Ascending aorta (tissue), 2 donors: ENCODE measurements at regions of chr3 and their contacts with region 1.

Region 1: GRCh38 chr3:71657831-71658530 is 67.2 kb downstream of the EIF4E3 start:
- DNase-seq: peak; percentile 64 to 94
- H3K4me3 ChIP-seq: peak overlapping the region; percentile 0 to 9
- H3K27ac ChIP-seq: peak overlapping the region; percentile 36 to 59
- H3K4me1 ChIP-seq: peaks cover 0 to 9% of the 10 kb centered on the region in 2 donors
- H3K27me3 ChIP-seq: no peaks in the 10 kb centered on the region
- CTCF ChIP-seq: no peak

Region 2: DNA sequence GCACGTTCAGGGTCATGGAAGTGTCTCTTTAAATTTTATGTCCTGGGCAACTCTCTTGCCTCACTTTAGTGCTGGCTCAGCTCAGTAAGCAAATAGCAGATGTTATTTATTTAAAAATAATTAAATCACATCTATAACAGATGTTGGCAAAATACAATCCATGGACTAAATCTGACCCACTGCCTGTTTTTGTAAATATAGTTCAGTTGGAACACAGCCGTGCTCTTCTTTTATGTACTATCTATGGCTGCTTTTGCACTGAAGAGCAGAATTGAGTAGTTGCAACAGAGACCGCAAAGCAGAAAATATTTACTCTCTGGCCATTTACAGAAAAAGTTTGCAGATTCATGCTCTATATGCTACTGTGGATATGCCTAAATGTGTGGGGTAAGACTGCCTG is 1579.2 kb before region 1 on chr3:
- intact Hi-C with region 1: loop called (anchors 5 kb)
- DNase-seq: no peak
- H3K4me3 ChIP-seq: no peak overlapping the region
- H3K27ac ChIP-seq: no peak overlapping the region
- H3K4me1 ChIP-seq: peaks cover 4 to 8% of the 10 kb centered on the region in 2 donors
- H3K27me3 ChIP-seq: no peaks in the 10 kb centered on the region
- CTCF ChIP-seq: no peak

Region 3: DNA sequence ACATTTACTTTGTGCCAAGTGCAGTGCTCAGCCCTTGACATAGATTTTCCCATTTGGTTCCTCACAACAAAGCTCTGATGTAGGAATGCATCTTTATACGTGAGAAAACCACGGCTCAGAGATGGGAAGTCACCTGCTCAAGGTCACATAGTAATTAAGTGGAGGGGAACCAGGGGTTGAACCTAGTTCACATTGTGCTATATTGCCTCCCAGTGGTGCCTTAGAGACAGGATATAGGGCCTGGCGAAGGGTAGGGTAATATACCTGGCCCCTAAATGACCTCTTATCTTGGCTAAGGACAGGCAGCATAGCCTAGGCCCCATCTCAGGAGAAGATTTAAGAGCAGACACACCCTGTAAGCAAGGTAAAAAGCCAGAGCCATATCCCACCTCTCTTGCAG is 146.0 kb before region 1 on chr3:
- intact Hi-C with region 1: no loop called
- DNase-seq: no peak
- H3K4me3 ChIP-seq: no peak overlapping the region
- H3K27ac ChIP-seq: peak overlapping the region; percentile 44 to 59
- H3K4me1 ChIP-seq: peaks cover 0 to 21% of the 10 kb centered on the region in 2 donors
- H3K27me3 ChIP-seq: no peaks in the 10 kb centered on the region
- CTCF ChIP-seq: no peak